ENCODE measurements at regions of chr11 and their contacts with region 1.

Region 1: DNA sequence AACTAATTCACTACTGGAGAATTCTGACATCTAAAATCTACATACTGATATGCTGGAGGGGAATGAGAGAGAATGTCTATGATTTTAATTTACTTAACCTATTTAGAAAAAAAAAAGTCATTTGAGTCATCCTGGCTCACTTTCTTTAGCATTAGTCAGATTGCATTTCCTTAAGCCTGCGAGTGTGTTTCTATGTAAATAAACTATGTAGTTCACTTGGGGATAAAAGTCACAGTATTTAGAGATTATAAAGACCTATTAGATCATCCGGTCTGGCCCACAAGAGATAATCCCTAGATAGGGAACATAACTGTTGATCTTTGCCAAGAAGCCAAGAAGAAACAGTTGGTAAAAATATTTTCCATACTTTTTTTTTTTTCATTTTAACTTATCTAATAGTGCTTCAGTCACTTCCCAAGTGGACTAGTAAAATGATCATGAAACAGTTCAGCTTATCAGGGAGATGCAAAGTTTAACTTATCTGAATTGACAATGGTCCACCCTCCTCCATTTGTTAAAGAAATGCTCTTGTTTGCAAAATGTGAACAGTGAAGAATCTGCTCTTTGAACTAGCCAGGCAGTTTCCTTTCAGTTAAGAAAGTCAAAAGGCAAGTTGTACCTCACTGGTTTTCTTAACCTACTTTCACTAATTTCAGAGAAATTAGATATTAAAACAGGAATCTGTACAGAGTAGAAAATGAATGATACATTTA is 21.2 kb upstream of the BLID start:
- DNase-seq: peak in 1 of 2 experiments; percentile 95
- H3K4me3 ChIP-seq: no peak overlapping the region
- H3K27ac ChIP-seq: peak overlapping the region; percentile 74
- H3K4me1 ChIP-seq: peaks cover 55% of the 10 kb centered on the region
- H3K27me3 ChIP-seq: no peaks in the 10 kb centered on the region
- CTCF ChIP-seq: no peak

Region 2: DNA sequence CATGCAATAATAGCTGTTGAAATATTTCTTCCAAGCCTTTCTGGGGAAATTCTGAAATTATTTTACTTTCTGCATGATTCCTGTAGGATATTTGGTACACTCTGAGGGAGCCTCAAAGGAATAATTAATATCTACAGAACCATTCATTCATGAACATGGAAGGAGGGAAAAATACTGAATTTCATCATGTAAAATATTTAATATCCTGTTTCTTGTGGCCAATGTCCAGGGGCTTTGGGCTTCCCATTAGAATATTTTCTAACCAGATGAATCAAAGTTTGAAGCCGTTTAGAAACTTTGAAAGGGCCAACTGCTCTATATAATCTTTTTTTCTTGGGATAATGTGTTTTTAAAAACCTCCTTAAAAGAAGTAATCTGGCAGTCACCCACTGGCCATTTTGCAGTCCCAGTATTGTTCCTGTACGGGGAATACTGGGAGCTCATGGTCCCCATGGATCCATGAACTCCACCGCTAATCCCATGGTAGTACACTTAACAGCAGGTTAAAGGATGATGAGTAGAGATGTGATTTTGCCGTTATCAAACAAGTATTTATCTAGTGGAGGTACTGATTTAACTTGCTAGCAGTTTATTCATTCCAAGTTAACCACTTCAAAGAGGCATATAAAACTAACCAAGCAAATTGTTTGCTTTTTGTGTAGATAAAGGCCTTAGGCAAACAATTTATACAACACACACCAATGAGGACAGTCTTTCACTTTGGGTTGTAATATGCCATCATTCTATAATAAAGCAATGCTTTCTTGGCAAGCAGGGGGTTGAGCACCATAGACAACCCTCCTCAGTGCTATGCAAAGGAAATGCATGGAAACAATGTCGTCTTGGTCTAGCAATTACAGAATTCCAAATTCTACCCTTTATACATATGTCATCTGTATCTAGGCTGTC is 13.2 kb after region 1 on chr11:
- CTCF ChIA-PET with region 1: no interaction called
- POLR2A ChIA-PET with region 1: no interaction called
- intact Hi-C with region 1: no loop called
- DNase-seq: peak in 1 of 2 experiments; percentile 74
- H3K4me3 ChIP-seq: no peak overlapping the region
- H3K27ac ChIP-seq: no peak overlapping the region
- H3K4me1 ChIP-seq: peaks cover 18% of the 10 kb centered on the region
- H3K27me3 ChIP-seq: no peaks in the 10 kb centered on the region
- CTCF ChIP-seq: no peak

Region 3: DNA sequence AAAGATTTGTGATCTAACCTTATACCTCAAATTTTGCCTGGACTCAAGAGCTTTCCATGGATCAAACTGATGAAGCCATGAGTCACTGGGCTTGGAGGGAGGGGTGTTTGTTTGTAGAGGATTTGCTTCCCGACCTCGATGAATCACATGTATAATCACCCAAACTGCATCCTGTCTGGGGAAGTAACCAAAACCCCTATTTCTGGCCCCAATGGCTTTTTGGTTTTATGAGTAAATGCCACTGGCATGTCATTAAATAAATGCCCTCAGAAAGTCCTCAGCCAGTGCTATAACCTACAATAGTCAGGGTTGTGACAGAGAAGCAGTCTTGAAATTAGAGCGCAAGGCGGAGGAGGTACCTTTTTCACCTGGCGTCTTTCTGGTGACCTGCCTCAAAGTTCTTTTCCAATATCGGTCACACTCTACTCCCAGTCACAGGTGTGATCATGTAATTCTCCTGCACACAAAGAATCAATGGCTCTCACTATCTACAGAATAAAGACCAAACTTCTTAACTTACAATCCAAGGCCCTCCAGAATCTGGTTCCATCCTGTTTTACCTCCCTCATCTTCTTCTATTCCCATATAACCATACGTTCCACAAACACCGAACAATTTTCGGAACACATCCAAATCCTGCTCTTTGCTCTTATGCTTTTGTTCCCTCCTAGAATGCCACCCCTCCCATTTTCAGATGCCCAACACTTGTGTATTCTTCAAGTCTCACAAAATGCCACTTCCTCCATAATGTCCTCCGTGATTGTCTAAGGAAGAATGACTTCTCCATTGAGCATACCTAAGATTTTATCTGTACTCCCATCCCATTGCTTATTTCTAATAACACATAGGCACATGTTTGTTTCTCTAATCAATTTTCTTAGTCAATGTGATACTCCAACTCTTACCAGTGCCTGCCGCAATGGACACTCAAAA is 60.1 kb after region 1 on chr11:
- CTCF ChIA-PET with region 1: interaction called, 3 read pairs
- POLR2A ChIA-PET with region 1: no interaction called
- intact Hi-C with region 1: loop called (anchors 1 kb)
- DNase-seq: peak; percentile 66 to 99
- H3K4me3 ChIP-seq: peak overlapping the region; percentile 19; the same call in 1 of the 2 replicates
- H3K27ac ChIP-seq: peak overlapping the region; percentile 85
- H3K4me1 ChIP-seq: peaks cover 56% of the 10 kb centered on the region
- H3K27me3 ChIP-seq: no peaks in the 10 kb centered on the region
- CTCF ChIP-seq: no peak

Region 4: GRCh38 chr11:122242731-122243130 is 105.5 kb after region 1 on chr11:
- CTCF ChIA-PET with region 1: no interaction called
- POLR2A ChIA-PET with region 1: no interaction called
- intact Hi-C with region 1: no loop called
- DNase-seq: no peak
- H3K4me3 ChIP-seq: no peak overlapping the region
- H3K27ac ChIP-seq: no peak overlapping the region
- H3K4me1 ChIP-seq: no peaks in the 10 kb centered on the region
- H3K27me3 ChIP-seq: no peaks in the 10 kb centered on the region
- CTCF ChIP-seq: no peak

Measured in PC-9 (cell line).